ENCODE measurements at regions of chr17 and their contacts with region 1.

Region 1: DNA sequence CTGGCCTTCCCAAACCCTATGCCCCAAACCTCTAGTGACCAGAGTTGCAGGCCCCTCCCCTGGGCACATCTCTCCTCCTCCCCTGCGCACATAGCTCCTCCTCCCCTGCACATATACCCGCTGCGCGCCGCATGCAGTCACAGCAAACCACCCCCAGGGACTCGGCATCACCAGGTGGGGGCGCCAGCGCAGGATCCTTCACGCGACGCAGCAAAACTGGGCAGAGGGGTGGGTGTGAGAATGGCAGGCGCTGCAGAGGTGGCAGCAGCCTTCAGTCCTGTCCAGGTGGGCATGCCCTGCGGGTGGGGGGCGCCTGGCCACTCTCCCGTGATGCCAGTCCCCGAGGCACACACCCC is 5.6 kb downstream of the CORO6 start:
- DNase-seq: peak; percentile 85 to 87
- H3K4me3 ChIP-seq: peak overlapping the region; percentile 42
- H3K4me3 Mint-ChIP-seq: peak overlapping the region; percentile 87
- H3K27ac Mint-ChIP-seq: peak overlapping the region; percentile 19
- H3K4me1 ChIP-seq: peaks cover 23% of the 10 kb centered on the region
- H3K4me1 Mint-ChIP-seq: peaks cover 9% of the 10 kb centered on the region
- H3K27me3 ChIP-seq: peaks cover 8% of the 10 kb centered on the region
- H3K27me3 Mint-ChIP-seq: peaks cover 5% of the 10 kb centered on the region
- CTCF ChIP-seq: peak; percentile 67 to 74

Region 2: DNA sequence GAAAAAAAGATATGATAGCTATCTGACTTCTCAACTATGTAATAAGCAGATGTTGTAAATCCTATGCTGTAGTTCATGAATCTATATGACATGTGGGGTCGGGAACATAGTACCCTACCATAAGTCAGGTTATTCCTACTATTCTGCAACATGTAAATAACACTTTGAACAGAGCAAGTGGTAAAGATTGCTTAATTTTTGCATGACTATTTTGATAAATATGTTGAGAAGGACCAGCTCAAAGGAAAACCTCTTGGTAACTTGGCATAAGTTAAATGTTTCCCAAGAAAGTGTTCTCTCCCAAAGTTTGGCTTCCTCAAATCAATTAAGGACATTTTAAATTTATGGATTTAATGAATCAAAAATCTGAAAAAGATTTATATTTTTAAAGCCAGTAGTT is 112.4 kb before region 1 on chr17:
- CTCF ChIA-PET with region 1: no interaction called
- POLR2A ChIA-PET with region 1: no interaction called
- intact Hi-C with region 1: no loop called
- DNase-seq: no peak
- H3K4me3 ChIP-seq: no peak overlapping the region
- H3K4me3 Mint-ChIP-seq: no peak overlapping the region
- H3K27ac Mint-ChIP-seq: no peak overlapping the region
- H3K4me1 ChIP-seq: no peaks in the 10 kb centered on the region
- H3K4me1 Mint-ChIP-seq: no peaks in the 10 kb centered on the region
- H3K27me3 ChIP-seq: no peaks in the 10 kb centered on the region
- H3K27me3 Mint-ChIP-seq: no peaks in the 10 kb centered on the region
- CTCF ChIP-seq: no peak

Region 3: DNA sequence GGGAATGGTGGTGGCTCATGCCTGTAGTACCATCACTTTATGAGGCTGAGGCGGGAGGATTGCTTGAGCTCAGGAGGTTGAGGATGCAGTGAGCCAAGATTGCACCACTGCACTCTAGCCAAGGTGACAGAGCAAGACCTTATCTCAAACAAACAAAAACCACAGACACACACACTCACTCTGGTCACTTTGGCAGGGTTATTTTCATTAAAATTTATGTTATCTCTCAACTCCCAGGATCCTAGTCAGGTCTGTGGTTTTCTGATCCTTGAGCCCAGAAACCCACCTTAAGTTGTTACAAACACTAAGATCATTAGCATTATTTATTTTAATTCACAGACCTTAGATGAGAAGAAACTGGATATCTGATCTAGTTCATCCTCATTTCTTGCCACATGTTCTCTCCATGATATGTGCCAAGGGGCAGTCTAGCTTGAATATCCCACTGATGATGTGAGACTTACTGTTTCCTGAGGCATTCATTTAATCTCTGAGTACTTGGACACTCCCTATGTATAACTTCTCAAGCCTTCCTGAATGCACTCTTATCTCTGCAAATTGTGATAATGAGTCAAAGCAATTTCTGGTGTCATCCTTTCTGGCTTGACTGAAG is 59.9 kb before region 1 on chr17:
- CTCF ChIA-PET with region 1: interaction called, 10 read pairs
- POLR2A ChIA-PET with region 1: no interaction called
- intact Hi-C with region 1: no loop called
- DNase-seq: peak in 1 of 2 experiments; percentile 39
- H3K4me3 ChIP-seq: no peak overlapping the region
- H3K4me3 Mint-ChIP-seq: peak overlapping the region; percentile 26
- H3K27ac Mint-ChIP-seq: peak overlapping the region; percentile 60
- H3K4me1 ChIP-seq: peaks cover 33% of the 10 kb centered on the region
- H3K4me1 Mint-ChIP-seq: peaks cover 17% of the 10 kb centered on the region
- H3K27me3 ChIP-seq: no peaks in the 10 kb centered on the region
- H3K27me3 Mint-ChIP-seq: no peaks in the 10 kb centered on the region
- CTCF ChIP-seq: no peak

Region 4: DNA sequence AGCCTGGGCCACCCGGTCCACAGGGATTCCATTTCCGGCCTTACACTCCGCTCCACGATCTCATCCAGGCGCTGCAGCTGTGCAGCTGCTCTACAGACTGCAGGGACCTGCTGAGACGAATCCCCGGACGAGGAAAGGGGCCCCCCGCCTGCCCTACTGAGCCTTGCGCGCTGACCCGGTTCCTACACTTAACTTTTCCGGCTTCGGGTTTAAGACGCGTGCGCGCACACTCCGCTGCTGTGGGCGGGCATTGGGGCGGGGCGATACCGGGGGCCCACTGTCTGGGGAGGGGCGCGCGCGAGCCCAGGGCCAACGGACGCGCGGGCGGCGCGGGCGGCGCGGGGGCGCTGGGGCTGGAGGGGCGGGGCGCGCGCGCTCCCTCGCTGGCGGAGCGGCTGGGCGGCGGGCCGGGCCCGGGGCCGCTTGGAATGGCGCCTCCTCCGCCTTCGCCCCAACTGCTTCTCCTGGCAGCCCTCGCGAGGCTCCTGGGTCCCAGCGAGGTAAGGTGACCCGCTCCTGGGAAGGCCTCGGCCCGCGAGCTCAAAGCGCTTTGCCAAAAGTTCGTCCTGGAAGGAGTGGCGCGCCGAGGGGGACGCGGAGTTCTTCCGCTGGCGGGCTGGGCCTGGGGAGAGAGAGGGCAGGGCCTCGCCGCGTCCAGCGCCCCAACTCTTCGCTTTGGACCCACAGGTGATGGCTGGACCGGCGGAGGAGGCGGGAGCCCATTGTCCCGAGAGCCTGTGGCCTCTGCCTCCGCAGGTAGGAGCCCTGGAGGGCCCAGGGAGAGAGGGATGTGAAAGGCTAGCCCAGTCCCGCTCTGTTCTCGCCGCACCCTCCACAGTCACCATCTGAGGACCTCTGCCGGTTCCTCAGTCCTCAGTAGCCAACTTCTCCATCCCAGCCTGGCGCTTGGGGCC is 48.5 kb before region 1 on chr17 and contains the start of gene TP53I13:
- CTCF ChIA-PET with region 1: interaction called, 20 read pairs
- POLR2A ChIA-PET with region 1: no interaction called
- intact Hi-C with region 1: no loop called
- DNase-seq: peak; percentile 92 to 93
- H3K4me3 ChIP-seq: peak within 1 kb of the TSS; percentile 87
- H3K4me3 Mint-ChIP-seq: peak within 1 kb of the TSS; percentile 97
- H3K27ac Mint-ChIP-seq: peak within 1 kb of the TSS; percentile 85
- H3K4me1 ChIP-seq: peaks cover 10% of the 10 kb centered on the region; the same call in 1 of the 2 replicates
- H3K4me1 Mint-ChIP-seq: peaks cover 6% of the 10 kb centered on the region
- H3K27me3 ChIP-seq: no peaks in the 10 kb centered on the region
- H3K27me3 Mint-ChIP-seq: no peaks in the 10 kb centered on the region
- CTCF ChIP-seq: no peak
- total RNA-seq, gene TP53I13: 43.9 and 49.2 TPM in 2 replicates

Region 5: GRCh38 chr17:29579866-29580771 is 37.0 kb before region 1 on chr17:
- CTCF ChIA-PET with region 1: interaction called, 16 read pairs
- POLR2A ChIA-PET with region 1: no interaction called
- intact Hi-C with region 1: loop called (anchors 2 kb)
- DNase-seq: peak; percentile 75 to 84
- H3K4me3 ChIP-seq: no peak overlapping the region
- H3K4me3 Mint-ChIP-seq: no peak overlapping the region
- H3K27ac Mint-ChIP-seq: no peak overlapping the region
- H3K4me1 ChIP-seq: peaks cover under 1% of the 10 kb centered on the region
- H3K4me1 Mint-ChIP-seq: no peaks in the 10 kb centered on the region
- H3K27me3 ChIP-seq: no peaks in the 10 kb centered on the region
- H3K27me3 Mint-ChIP-seq: no peaks in the 10 kb centered on the region
- CTCF ChIP-seq: peak; percentile 82 to 88

Region 6: DNA sequence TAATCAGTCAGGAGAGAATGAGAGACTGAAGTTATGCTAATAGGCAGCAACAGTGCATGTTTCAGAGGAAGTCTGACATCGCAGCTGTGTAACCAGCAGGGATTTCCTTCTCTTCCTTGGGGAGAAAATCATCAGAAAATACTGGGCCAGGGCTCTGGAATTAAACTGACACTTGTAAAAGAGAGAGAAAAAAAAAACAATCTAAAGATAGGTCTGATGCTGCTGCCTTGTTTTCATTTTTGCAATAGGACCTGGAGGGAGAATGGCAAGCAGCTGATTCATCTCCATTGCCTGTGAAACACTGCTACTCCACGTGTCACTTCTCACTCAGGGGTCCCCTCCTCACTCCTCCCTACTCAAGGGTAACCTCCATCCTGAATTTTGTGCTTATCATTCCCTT is 23.3 kb after region 1 on chr17:
- CTCF ChIA-PET with region 1: interaction called, 26 read pairs
- POLR2A ChIA-PET with region 1: no interaction called
- intact Hi-C with region 1: no loop called
- DNase-seq: no peak
- H3K4me3 ChIP-seq: no peak overlapping the region
- H3K4me3 Mint-ChIP-seq: no peak overlapping the region
- H3K27ac Mint-ChIP-seq: peak overlapping the region; percentile 7
- H3K4me1 ChIP-seq: peaks cover 13% of the 10 kb centered on the region
- H3K4me1 Mint-ChIP-seq: no peaks in the 10 kb centered on the region
- H3K27me3 ChIP-seq: no peaks in the 10 kb centered on the region
- H3K27me3 Mint-ChIP-seq: no peaks in the 10 kb centered on the region
- CTCF ChIP-seq: no peak

Region 7: DNA sequence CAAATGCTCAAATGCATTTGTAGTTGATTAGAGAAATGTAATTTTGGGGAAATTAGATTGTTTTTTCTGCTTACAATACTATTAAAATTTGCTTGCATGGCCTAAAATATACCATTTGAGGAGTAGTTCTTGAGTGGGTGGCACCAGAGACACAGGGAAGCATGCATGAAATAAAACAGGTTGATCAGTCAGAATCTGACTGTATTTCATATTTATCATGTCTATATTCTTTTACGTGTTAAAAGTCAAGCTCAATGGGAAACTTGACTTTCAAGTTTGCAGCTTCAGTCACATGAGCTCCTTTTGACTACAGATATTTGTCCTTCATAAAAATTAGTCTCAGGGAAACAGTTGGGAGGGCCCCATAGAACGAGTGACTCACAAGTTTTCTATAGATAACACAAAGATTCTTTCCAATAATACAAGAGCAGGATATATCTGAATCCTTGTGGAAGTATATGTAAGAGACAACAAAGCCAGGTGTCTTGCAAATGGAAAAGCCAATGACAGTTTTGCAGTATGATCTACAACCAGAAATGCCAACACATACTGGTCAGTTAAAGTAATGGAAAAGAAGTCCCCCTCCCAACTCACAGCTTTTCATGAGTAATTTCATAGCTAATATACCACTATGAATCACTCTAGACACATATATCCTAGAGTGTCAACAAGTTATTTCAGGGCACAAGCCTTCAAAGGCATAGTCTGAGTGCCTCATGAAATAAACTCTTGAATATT is 47.8 kb after region 1 on chr17:
- CTCF ChIA-PET with region 1: no interaction called
- POLR2A ChIA-PET with region 1: no interaction called
- intact Hi-C with region 1: no loop called
- DNase-seq: peak in 1 of 2 experiments; percentile 20
- H3K4me3 ChIP-seq: no peak overlapping the region
- H3K4me3 Mint-ChIP-seq: no peak overlapping the region
- H3K27ac Mint-ChIP-seq: no peak overlapping the region
- H3K4me1 ChIP-seq: peaks cover 23% of the 10 kb centered on the region
- H3K4me1 Mint-ChIP-seq: peaks cover 22% of the 10 kb centered on the region
- H3K27me3 ChIP-seq: no peaks in the 10 kb centered on the region
- H3K27me3 Mint-ChIP-seq: no peaks in the 10 kb centered on the region
- CTCF ChIP-seq: no peak

Measured in Caco-2 (cell line).